Activated CD4-positive, alpha-beta T cell treated with anti-CD3 and anti-CD28 coated beads for 36 hours (primary cell): ENCODE measurements at regions of chr6 and their contacts with region 1.

Region 1: DNA sequence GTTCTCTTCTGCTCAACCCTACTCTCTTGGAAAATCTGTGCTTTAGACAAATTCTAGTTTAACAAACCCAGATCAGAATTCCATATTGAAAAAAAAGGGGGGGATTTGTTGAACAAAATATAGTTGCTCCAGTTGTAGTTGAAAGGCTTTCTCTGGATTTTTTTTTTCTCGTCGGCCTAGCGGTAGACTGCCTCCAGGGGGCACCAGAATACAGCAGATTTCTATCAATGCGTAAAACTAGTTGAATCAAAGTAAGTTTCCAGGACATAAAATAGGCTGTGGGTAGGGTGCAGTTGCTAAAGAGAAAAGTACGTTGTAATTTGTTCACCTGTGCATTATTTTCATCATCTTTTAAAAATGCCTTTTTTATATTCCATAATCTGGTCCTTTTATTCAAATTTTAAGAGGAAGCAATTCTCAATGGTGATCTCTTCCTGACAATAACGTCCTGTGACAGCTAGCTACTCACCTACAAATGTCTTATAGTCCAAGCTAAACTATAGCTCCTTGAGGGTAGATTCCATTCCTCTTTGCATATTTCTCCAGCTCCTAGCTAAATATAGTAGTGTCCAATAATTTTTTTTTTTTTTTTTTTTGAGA is 105.4 kb downstream of the PERP start:
- DNase-seq: peak; percentile 76
- ATAC-seq: peak; percentile 31
- H3K4me3 Mint-ChIP-seq: no peak overlapping the region
- H3K27ac Mint-ChIP-seq: no peak overlapping the region
- H3K4me1 Mint-ChIP-seq: peaks cover 20% of the 10 kb centered on the region
- H3K27me3 Mint-ChIP-seq: peaks cover 3% of the 10 kb centered on the region

Region 2: DNA sequence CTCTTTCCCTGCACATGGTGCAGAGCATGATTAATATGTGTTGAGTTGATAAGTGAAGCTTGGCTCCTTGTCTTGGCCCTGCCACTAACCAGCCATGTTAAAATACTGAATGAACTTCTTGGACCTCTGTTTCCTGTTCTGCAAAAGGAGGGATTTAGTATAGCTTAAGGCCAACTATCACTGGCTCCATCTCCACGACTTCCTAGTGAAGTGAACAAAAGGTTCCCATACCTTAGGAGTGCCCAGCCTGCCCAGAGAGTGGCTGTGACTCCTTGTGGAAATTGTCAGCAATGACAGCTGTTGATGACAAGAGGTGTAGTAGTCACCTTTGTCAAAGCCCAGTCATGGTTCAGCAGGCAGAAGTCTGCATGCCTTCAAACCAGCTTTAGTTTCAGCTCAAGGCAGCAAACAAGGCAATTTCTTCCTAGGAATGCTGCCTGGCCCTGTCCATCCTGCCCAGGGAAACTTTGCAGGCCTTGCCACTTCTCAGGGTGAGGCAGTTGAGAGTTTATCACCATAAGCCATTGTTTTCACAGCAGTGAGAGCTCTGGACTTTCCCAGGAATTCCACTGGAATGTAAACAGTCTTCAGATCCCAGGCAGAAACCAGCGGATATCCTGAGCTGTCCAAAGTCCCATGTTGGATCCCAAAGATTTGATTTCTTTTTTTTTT is 304.4 kb before region 1 on chr6:
- CTCF ChIA-PET with region 1: interaction called, 14 read pairs
- POLR2A ChIA-PET with region 1: no interaction called
- intact Hi-C with region 1: no loop called
- DNase-seq: peak; percentile 46
- ATAC-seq: peak; percentile 43
- H3K4me3 Mint-ChIP-seq: no peak overlapping the region
- H3K27ac Mint-ChIP-seq: peak overlapping the region; percentile 60
- H3K4me1 Mint-ChIP-seq: peaks cover 47% of the 10 kb centered on the region
- H3K27me3 Mint-ChIP-seq: peaks cover 7% of the 10 kb centered on the region

Region 3: GRCh38 chr6:137989664-137990063 is 12.2 kb before region 1 on chr6:
- CTCF ChIA-PET with region 1: interaction called, 14 read pairs
- POLR2A ChIA-PET with region 1: no interaction called
- intact Hi-C with region 1: no loop called
- DNase-seq: no peak
- ATAC-seq: no peak
- H3K4me3 Mint-ChIP-seq: no peak overlapping the region
- H3K27ac Mint-ChIP-seq: no peak overlapping the region
- H3K4me1 Mint-ChIP-seq: no peaks in the 10 kb centered on the region
- H3K27me3 Mint-ChIP-seq: peaks cover 4% of the 10 kb centered on the region

Region 4: GRCh38 chr6:138109042-138109997 is 107.5 kb after region 1 on chr6:
- CTCF ChIA-PET with region 1: interaction called, 21 read pairs
- POLR2A ChIA-PET with region 1: no interaction called
- intact Hi-C with region 1: loop called (anchors 1 kb)
- DNase-seq: peak; percentile 89
- ATAC-seq: peak; percentile 49
- H3K4me3 Mint-ChIP-seq: no peak overlapping the region
- H3K27ac Mint-ChIP-seq: no peak overlapping the region
- H3K4me1 Mint-ChIP-seq: peaks cover 14% of the 10 kb centered on the region
- H3K27me3 Mint-ChIP-seq: peaks cover 34% of the 10 kb centered on the region

Region 5: DNA sequence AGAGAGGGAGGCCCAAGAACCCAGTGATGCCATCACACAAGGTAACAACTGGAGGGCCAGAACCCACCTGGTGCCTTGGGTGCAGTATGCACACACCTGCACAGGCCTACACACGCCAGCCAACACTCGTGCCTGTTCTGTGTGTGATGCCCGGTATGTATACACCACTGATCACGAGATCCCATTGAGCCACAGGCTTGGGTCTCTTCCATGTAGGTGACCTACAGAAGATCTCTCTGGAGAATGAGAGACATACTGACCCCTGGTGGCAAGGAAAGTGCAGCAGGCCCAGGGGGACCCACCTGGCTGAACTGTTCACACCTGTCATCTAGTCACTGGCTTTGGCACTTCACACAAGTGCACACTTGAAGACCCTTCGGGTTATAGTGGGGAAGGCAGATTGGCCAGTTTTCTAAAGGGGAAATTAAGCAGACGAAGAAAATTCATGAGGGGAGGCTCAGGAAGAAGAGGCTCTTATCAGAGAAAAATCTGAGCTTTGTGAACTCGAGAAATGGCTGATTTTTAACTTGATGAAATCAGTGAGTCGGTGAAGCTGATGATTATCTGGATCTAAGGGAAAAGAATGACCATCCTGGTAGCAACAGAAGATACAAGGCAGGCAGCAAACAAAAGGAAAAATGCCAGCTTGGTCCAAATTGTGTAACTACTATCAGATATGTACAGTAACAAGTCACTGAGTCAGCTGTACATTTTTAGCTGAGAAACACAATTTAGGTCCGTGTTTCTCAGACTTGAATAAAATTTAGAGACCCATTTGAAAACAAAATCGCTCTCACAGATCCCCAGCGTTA is 285.5 kb after region 1 on chr6:
- CTCF ChIA-PET with region 1: no interaction called
- POLR2A ChIA-PET with region 1: no interaction called
- intact Hi-C with region 1: loop called in 1 of 2 experiments (anchors 5 kb)
- DNase-seq: peak; percentile 70
- ATAC-seq: peak; percentile 63
- H3K4me3 Mint-ChIP-seq: no peak overlapping the region
- H3K27ac Mint-ChIP-seq: no peak overlapping the region
- H3K4me1 Mint-ChIP-seq: peaks cover 3% of the 10 kb centered on the region
- H3K27me3 Mint-ChIP-seq: peaks cover 1% of the 10 kb centered on the region

Region 6: DNA sequence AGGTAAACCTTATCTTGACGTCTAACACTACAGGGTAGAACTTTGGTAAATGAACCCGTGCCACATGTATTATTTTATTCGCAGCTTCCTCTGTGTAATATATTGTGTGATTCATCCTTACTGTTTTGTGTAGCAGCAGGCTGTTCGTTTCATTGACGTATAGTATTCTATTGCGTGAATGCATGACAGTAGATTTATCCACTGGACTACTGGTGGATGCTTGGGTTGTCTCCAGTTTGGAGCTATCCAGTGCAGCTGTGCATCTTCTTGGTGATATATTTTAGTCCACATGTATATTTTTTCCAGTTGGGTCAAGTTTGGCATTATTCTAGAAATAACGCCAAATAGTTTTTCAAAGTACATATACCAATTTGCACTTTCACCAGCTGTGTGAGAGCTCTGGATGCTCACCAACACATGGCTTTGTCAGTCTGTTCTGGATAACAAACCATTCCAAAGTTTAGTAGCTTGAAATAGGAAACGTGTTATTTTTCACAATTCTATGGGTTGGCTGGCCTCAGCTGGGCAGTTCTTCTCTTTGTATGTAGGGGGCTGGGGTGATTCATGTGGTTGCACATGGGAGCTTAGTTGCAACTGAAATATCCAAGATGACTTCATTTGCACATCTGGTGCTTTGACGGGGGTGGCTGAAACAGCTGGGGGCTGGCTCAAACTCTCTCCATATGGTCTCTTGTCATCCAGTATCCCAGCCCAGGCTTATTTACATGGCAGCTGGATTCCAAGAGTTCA is 803.3 kb after region 1 on chr6:
- CTCF ChIA-PET with region 1: no interaction called
- POLR2A ChIA-PET with region 1: no interaction called
- intact Hi-C with region 1: no loop called
- DNase-seq: no peak
- ATAC-seq: no peak
- H3K4me3 Mint-ChIP-seq: no peak overlapping the region
- H3K27ac Mint-ChIP-seq: no peak overlapping the region
- H3K4me1 Mint-ChIP-seq: no peaks in the 10 kb centered on the region
- H3K27me3 Mint-ChIP-seq: peaks cover 3% of the 10 kb centered on the region